ENCODE measurements at regions of chr7 and their contacts with region 1.

Region 1: DNA sequence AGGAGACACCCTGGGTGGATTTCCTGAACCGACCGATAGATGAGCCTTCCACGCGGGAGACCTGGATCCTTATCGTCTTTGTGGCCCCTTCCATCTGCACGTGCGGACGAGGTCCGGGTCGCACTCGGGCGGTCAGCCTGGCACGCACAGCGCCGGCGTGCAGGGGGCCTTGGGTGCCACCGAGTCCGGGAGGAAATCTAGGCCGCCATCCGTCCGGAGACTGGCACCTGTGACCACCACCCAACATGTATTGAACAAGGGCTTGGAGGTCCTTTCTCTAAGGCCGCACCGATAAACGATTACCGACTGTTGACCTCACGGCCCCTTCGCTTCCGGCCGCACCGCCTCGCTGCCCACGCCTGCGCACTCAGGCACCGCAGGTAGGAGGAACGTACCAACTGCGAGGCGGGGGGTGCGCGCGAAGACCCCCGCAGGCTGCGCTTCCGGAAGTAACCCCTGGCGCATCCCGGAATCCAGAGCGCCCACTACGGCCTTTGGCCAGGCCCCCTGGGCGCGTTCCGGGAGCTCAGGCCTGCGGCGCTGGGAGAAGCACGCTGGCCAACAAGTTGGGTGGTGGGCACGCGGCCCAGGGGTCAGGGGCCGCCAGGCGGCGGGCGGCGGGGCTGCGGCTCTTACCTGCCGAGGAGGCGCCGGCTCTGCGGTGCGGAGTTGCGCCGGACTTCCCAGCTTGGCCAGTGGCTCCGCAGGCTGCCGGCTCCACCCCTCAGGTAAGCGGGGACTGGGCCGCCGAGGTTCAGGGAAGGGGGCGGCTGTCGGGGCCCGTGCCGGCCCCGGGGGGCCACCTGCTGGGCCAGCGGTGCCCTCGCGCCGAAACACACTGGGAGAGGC is at the starts of genes ACTR3C and LRRC61:
- DNase-seq: peak; percentile 79
- H3K4me3 Mint-ChIP-seq: peak within 1 kb of the TSS; percentile 97
- H3K27ac Mint-ChIP-seq: peak within 1 kb of the TSS; percentile 100
- H3K4me1 Mint-ChIP-seq: peaks cover 59% of the 10 kb centered on the region
- H3K27me3 Mint-ChIP-seq: no peaks in the 10 kb centered on the region
- total RNA-seq, gene ACTR3C: 8.0 to 8.8 TPM
- total RNA-seq, gene LRRC61: 26.1 to 27.1 TPM

Region 2: DNA sequence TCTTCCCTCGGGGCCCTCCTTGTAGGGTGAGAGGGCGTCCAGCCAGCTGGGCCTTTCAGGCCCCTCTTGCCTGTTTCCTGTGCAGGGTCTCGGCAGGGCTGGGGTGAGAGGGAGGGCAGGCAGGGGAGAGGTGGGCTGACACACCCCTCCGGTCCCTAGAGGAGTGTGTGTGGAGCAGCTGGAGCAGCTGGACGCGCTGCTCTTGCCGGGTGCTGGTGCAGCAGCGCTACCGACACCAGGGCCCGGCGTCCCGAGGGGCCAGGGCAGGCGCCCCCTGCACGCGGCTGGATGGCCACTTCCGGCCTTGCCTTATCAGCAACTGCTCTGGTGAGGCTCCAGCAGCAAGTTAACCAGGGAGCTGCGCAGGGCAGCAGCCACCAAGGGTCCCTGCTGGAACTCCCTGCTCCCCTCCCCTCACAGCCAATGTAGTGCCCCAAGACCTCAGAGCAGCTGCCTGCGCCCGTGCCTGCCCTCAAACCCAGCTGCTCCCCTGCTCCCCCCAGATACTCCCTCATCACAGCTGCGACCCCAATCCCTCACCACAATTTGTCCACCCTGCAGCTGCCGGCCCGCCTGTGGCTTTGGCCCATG is 500.6 kb before region 1 on chr7:
- CTCF ChIA-PET with region 1: no interaction called
- POLR2A ChIA-PET with region 1: no interaction called
- intact Hi-C with region 1: no loop called
- DNase-seq: no peak
- H3K4me3 Mint-ChIP-seq: no peak overlapping the region
- H3K27ac Mint-ChIP-seq: no peak overlapping the region
- H3K4me1 Mint-ChIP-seq: no peaks in the 10 kb centered on the region
- H3K27me3 Mint-ChIP-seq: no peaks in the 10 kb centered on the region

Region 3: DNA sequence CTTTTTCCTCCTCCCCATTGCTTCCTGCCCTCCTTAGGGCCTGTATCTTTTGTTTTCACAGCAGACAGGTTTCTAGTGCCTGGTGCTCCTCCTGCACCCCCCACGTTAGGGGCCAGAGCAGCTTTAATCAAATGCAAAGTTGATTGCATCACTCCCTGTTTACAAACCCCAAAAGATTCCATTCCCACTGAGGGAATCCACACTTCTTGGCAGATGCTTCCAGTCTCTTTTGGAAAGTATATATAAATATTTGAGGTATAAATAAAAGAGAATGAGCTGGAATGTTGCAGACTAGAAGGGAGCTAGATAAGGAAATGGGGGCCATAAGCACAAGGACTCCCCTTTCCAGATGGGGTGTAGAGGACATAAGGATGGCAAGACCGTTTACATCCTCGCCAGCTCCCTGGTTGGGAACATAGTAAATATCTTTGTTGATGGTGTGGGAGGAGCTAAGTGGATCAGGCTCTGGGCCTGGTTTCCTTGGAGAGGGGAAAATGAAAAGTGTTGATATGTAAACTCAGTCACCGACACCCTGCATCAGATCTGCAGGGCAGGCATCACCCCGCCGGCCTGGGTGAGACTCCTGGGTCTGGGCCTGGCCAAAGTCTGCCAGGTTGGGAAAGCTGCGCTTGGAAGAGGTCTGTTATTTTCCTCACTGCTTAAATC is 12.2 kb after region 1 on chr7:
- CTCF ChIA-PET with region 1: no interaction called
- POLR2A ChIA-PET with region 1: no interaction called
- intact Hi-C with region 1: no loop called
- DNase-seq: no peak
- H3K4me3 Mint-ChIP-seq: no peak overlapping the region
- H3K27ac Mint-ChIP-seq: no peak overlapping the region
- H3K4me1 Mint-ChIP-seq: peaks cover 2% of the 10 kb centered on the region
- H3K27me3 Mint-ChIP-seq: peaks cover 8% of the 10 kb centered on the region

Region 4: GRCh38 chr7:150356265-150356897 is 33.3 kb after region 1 on chr7:
- CTCF ChIA-PET with region 1: interaction called, 4 read pairs
- POLR2A ChIA-PET with region 1: no interaction called
- intact Hi-C with region 1: loop called (anchors 1 kb)
- DNase-seq: no peak
- H3K4me3 Mint-ChIP-seq: no peak overlapping the region
- H3K27ac Mint-ChIP-seq: peak overlapping the region; percentile 33
- H3K4me1 Mint-ChIP-seq: peaks cover 36% of the 10 kb centered on the region
- H3K27me3 Mint-ChIP-seq: no peaks in the 10 kb centered on the region

Region 5: DNA sequence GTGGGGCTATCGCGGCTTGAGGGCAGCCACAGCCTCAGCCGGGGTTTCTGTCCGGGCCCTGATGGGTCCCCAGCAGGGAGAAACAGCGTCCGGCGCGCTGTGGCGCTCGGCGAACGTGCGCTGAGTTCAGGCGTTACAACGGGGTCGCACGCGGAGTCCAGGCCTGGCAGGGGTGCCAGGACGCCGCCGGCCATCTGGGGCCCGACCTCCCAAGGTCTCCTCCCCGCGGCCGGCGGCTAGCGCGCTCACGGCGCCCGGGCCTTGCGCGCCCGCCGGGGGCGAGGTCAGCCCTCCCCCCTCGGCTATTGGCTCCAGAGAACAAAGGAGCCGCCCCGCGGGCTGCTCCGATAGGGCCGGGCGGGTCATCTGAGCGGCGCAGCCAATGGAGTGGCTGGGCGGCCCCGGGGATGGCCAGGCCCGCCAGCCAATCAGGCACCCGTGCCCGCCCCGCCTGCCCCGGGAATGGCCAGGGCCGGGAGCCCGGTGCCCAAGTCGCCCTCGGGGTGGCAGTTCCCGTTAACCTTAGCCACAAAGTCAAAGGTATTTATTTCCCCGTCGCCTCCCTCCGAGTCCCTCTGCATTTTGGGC is 55.9 kb after region 1 on chr7 and contains the start of gene ZNF775:
- CTCF ChIA-PET with region 1: no interaction called
- POLR2A ChIA-PET with region 1: interaction called, 4 read pairs
- intact Hi-C with region 1: loop called (anchors 2 kb)
- DNase-seq: peak; percentile 95
- H3K4me3 Mint-ChIP-seq: peak within 1 kb of the TSS; percentile 81
- H3K27ac Mint-ChIP-seq: peak within 1 kb of the TSS; percentile 72
- H3K4me1 Mint-ChIP-seq: peaks cover 42% of the 10 kb centered on the region
- H3K27me3 Mint-ChIP-seq: no peaks in the 10 kb centered on the region
- total RNA-seq, gene ZNF775: 6.0 to 6.8 TPM

Region 6: DNA sequence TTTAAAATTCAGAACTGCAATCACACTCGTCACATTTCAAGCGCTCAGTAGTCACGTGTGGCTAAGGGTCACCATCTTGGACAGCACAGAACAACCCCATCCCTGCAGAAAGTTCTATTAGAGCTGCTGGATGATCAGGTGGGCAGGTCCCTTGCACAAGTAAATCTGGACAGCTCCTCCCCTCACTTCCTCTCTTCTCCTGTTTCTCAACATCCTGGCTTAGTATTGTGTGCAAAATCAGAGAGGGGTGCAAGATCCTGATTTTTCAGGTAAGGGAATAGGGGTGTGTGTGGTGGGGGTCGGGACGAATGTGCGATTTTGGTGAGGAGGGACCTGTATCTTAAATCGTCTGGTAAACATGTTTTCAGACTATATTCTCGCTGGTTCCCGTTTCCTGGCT is 244.1 kb after region 1 on chr7 and contains the start of gene GIMAP4:
- CTCF ChIA-PET with region 1: no interaction called
- POLR2A ChIA-PET with region 1: no interaction called
- intact Hi-C with region 1: loop called (anchors 5 kb)
- DNase-seq: peak; percentile 55
- H3K4me3 Mint-ChIP-seq: peak within 1 kb of the TSS; percentile 94
- H3K27ac Mint-ChIP-seq: peak within 1 kb of the TSS; percentile 98
- H3K4me1 Mint-ChIP-seq: peaks cover 65% of the 10 kb centered on the region
- H3K27me3 Mint-ChIP-seq: no peaks in the 10 kb centered on the region
- total RNA-seq, gene GIMAP4: 128 to 140 TPM